ENCODE measurements at regions of chr17 and their contacts with region 1.

Region 1: GRCh38 chr17:57130761-57131461 is 45.9 kb downstream of the AKAP1 start:
- DNase-seq: peak; percentile 25
- ATAC-seq: peak; percentile 99
- H3K4me3 ChIP-seq: no peak overlapping the region
- H3K27ac ChIP-seq: no peak overlapping the region
- H3K4me1 ChIP-seq: peaks cover 5% of the 10 kb centered on the region
- H3K27me3 ChIP-seq: no peaks in the 10 kb centered on the region
- CTCF ChIP-seq: peak; percentile 59 to 84 (median 80)
- EP300 ChIP-seq: no peak
- POLR2A ChIP-seq: no peak
- RAD21 ChIP-seq: peak; percentile 79

Region 2: DNA sequence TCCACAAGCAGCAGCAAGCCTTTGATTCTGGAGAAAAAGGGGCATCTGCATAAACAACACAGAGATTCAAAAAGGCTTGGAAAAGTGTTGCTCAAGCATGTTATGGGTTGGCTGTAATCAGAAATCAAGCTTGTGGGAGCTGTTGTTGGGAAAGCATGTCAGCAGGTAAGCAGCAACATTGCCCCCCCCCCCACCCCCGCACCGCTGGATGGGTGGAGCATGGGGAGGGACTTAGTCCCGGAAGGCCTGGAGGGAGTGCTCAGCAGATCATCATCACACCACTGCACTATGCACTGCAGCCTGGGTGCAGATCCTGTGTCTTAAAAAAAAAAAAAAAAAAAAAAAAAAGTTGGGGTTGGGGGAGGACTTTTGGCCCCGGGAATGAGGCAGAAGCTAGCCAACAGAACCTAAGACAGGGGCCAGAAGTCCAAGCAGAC is 62.7 kb before region 1 on chr17:
- CTCF ChIA-PET with region 1: no interaction called
- POLR2A ChIA-PET with region 1: no interaction called
- RAD21 ChIA-PET with region 1: no interaction called
- SMC1A ChIA-PET with region 1: no interaction called
- in situ Hi-C with region 1: no loop called
- intact Hi-C with region 1: no loop called
- DNase-seq: no peak
- ATAC-seq: peak; percentile 79
- H3K4me3 ChIP-seq: no peak overlapping the region
- H3K27ac ChIP-seq: no peak overlapping the region
- H3K4me1 ChIP-seq: no peaks in the 10 kb centered on the region
- H3K27me3 ChIP-seq: no peaks in the 10 kb centered on the region
- CTCF ChIP-seq: no peak
- EP300 ChIP-seq: no peak
- POLR2A ChIP-seq: no peak
- RAD21 ChIP-seq: no peak

Region 3: GRCh38 chr17:57120814-57121213 is 10.1 kb before region 1 on chr17:
- CTCF ChIA-PET with region 1: no interaction called
- POLR2A ChIA-PET with region 1: no interaction called
- RAD21 ChIA-PET with region 1: no interaction called
- SMC1A ChIA-PET with region 1: no interaction called
- in situ Hi-C with region 1: no loop called
- intact Hi-C with region 1: no loop called
- DNase-seq: no peak
- ATAC-seq: no peak
- H3K4me3 ChIP-seq: no peak overlapping the region
- H3K27ac ChIP-seq: no peak overlapping the region
- H3K4me1 ChIP-seq: no peaks in the 10 kb centered on the region
- H3K27me3 ChIP-seq: no peaks in the 10 kb centered on the region
- CTCF ChIP-seq: no peak
- EP300 ChIP-seq: no peak
- POLR2A ChIP-seq: no peak
- RAD21 ChIP-seq: no peak

Region 4: GRCh38 chr17:57739402-57740392 is 608.8 kb after region 1 on chr17:
- CTCF ChIA-PET with region 1: interaction called, 20 read pairs
- POLR2A ChIA-PET with region 1: no interaction called
- RAD21 ChIA-PET with region 1: interaction called, 6 read pairs
- SMC1A ChIA-PET with region 1: interaction called, 15 read pairs
- in situ Hi-C with region 1: no loop called
- intact Hi-C with region 1: no loop called
- DNase-seq: no peak
- ATAC-seq: peak; percentile 87
- H3K4me3 ChIP-seq: no peak overlapping the region
- H3K27ac ChIP-seq: no peak overlapping the region
- H3K4me1 ChIP-seq: peaks cover 20% of the 10 kb centered on the region
- H3K27me3 ChIP-seq: no peaks in the 10 kb centered on the region
- CTCF ChIP-seq: peak; percentile 48 to 63 (median 60); a peak in 5 of 6 replicates
- EP300 ChIP-seq: no peak
- POLR2A ChIP-seq: no peak
- RAD21 ChIP-seq: peak; percentile 71

Region 5: GRCh38 chr17:57747221-57748017 is 616.5 kb after region 1 on chr17:
- CTCF ChIA-PET with region 1: interaction called, 16 read pairs
- POLR2A ChIA-PET with region 1: no interaction called
- RAD21 ChIA-PET with region 1: interaction called, 5 read pairs
- SMC1A ChIA-PET with region 1: interaction called, 7 read pairs
- in situ Hi-C with region 1: loop called (anchors 5 kb)
- intact Hi-C with region 1: loop called (anchors 2 kb)
- DNase-seq: no peak
- ATAC-seq: peak; percentile 83
- H3K4me3 ChIP-seq: no peak overlapping the region
- H3K27ac ChIP-seq: no peak overlapping the region
- H3K4me1 ChIP-seq: peaks cover 12% of the 10 kb centered on the region
- H3K27me3 ChIP-seq: no peaks in the 10 kb centered on the region; a peak in 2 of 4 replicates
- CTCF ChIP-seq: peak; percentile 79 to 87 (median 84)
- EP300 ChIP-seq: no peak
- POLR2A ChIP-seq: no peak
- RAD21 ChIP-seq: peak; percentile 94

Region 6: GRCh38 chr17:57833179-57833939 is 702.4 kb after region 1 on chr17:
- CTCF ChIA-PET with region 1: interaction called, 14 read pairs
- POLR2A ChIA-PET with region 1: no interaction called
- RAD21 ChIA-PET with region 1: interaction called, 4 read pairs
- SMC1A ChIA-PET with region 1: interaction called, 5 read pairs
- in situ Hi-C with region 1: loop called (anchors 5 kb)
- intact Hi-C with region 1: loop called (anchors 5 kb)
- DNase-seq: no peak
- ATAC-seq: peak; percentile 95
- H3K4me3 ChIP-seq: 0 out of 2 replicates have a peak overlapping the region, but pooled peaks have one; percentile 4
- H3K27ac ChIP-seq: no peak overlapping the region
- H3K4me1 ChIP-seq: peaks cover 5% of the 10 kb centered on the region; the same call in 1 of the 2 replicates
- H3K27me3 ChIP-seq: no peaks in the 10 kb centered on the region
- CTCF ChIP-seq: peak; percentile 87 to 94 (median 92)
- EP300 ChIP-seq: no peak
- POLR2A ChIP-seq: no peak
- RAD21 ChIP-seq: peak; percentile 74